Activated CD4-positive, alpha-beta T cell treated with anti-CD3 and anti-CD28 coated beads for 36 hours (primary cell): ENCODE measurements at regions of chr15 and their contacts with region 1.

Region 1: GRCh38 chr15:73633111-73633990 is at the start of gene NPTN:
- DNase-seq: peak; percentile 99
- ATAC-seq: peak; percentile 91
- H3K4me3 Mint-ChIP-seq: peak within 1 kb of the TSS; percentile 86
- H3K27ac Mint-ChIP-seq: peak within 1 kb of the TSS; percentile 71
- H3K4me1 Mint-ChIP-seq: peaks cover 52% of the 10 kb centered on the region
- H3K27me3 Mint-ChIP-seq: peaks cover 14% of the 10 kb centered on the region
- total RNA-seq, gene NPTN: 43.5 to 73.4 TPM

Region 2: GRCh38 chr15:72783563-72784237 is 849.7 kb before region 1 on chr15 and contains the start of gene ADPGK:
- CTCF ChIA-PET with region 1: no interaction called
- POLR2A ChIA-PET with region 1: no interaction called
- intact Hi-C with region 1: loop called in 1 of 2 experiments (anchors 1 kb)
- DNase-seq: peak; percentile 95
- ATAC-seq: peak; percentile 80
- H3K4me3 Mint-ChIP-seq: peak within 1 kb of the TSS; percentile 97
- H3K27ac Mint-ChIP-seq: peak within 1 kb of the TSS; percentile 99
- H3K4me1 Mint-ChIP-seq: peaks cover 60% of the 10 kb centered on the region
- H3K27me3 Mint-ChIP-seq: no peaks in the 10 kb centered on the region
- total RNA-seq, gene ADPGK: 58.0 to 70.8 TPM

Region 3: GRCh38 chr15:73284090-73284716 is 349.1 kb before region 1 on chr15:
- CTCF ChIA-PET with region 1: interaction called, 7 read pairs
- POLR2A ChIA-PET with region 1: no interaction called
- intact Hi-C with region 1: loop called in 1 of 2 experiments (anchors 1 kb)
- DNase-seq: no peak
- ATAC-seq: no peak
- H3K4me3 Mint-ChIP-seq: no peak overlapping the region
- H3K27ac Mint-ChIP-seq: no peak overlapping the region
- H3K4me1 Mint-ChIP-seq: peaks cover 10% of the 10 kb centered on the region
- H3K27me3 Mint-ChIP-seq: no peaks in the 10 kb centered on the region

Region 4: DNA sequence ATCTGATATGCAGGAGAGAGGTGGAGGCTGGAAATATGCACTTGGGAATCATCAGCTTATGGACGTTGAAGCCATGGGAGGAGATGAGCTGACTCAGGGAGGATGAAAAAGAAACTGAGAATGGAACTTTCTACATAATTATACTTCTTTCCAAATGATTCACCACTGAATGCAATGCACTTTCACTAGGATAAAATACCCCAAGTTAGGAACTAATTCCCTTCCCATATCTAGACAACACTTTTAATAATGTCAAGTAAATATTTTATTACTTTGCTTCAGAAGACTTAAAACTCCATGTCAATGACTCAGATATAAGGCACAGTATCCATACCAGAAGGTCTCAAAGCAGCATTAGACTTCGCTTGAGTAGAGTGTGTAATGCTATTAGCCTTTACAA is 24.4 kb before region 1 on chr15:
- CTCF ChIA-PET with region 1: interaction called, 121 read pairs
- POLR2A ChIA-PET with region 1: interaction called, 3 read pairs
- intact Hi-C with region 1: no loop called
- DNase-seq: no peak
- ATAC-seq: peak; percentile 49
- H3K4me3 Mint-ChIP-seq: no peak overlapping the region
- H3K27ac Mint-ChIP-seq: no peak overlapping the region
- H3K4me1 Mint-ChIP-seq: peaks cover 54% of the 10 kb centered on the region
- H3K27me3 Mint-ChIP-seq: no peaks in the 10 kb centered on the region

Region 5: DNA sequence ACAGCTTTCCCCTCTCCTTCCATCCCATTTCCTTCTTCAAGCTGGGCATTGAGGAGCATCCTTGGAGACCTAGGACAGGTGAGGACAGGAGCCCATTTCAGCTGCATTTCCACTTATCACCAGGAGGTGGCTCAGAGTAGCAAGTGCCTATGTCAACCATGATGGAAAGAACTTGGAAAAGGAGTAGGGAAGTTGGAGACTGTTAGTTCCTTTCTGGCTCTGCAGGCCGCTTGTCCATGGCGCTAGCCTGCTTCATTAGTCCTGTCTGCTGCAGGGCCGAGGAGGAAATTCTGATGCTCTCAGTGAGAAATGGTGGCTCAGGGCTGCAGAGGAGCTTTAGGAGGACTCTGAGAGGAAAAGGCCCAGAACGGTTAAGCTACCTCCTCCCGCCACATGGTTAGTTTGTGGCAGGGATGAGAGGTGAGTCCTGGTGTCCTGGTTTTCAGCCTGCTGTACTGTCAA is 43.8 kb after region 1 on chr15:
- CTCF ChIA-PET with region 1: interaction called, 31 read pairs
- POLR2A ChIA-PET with region 1: interaction called, 9 read pairs
- intact Hi-C with region 1: no loop called
- DNase-seq: peak; percentile 68
- ATAC-seq: peak; percentile 49
- H3K4me3 Mint-ChIP-seq: no peak overlapping the region
- H3K27ac Mint-ChIP-seq: no peak overlapping the region
- H3K4me1 Mint-ChIP-seq: peaks cover 17% of the 10 kb centered on the region
- H3K27me3 Mint-ChIP-seq: peaks cover 33% of the 10 kb centered on the region

Region 6: DNA sequence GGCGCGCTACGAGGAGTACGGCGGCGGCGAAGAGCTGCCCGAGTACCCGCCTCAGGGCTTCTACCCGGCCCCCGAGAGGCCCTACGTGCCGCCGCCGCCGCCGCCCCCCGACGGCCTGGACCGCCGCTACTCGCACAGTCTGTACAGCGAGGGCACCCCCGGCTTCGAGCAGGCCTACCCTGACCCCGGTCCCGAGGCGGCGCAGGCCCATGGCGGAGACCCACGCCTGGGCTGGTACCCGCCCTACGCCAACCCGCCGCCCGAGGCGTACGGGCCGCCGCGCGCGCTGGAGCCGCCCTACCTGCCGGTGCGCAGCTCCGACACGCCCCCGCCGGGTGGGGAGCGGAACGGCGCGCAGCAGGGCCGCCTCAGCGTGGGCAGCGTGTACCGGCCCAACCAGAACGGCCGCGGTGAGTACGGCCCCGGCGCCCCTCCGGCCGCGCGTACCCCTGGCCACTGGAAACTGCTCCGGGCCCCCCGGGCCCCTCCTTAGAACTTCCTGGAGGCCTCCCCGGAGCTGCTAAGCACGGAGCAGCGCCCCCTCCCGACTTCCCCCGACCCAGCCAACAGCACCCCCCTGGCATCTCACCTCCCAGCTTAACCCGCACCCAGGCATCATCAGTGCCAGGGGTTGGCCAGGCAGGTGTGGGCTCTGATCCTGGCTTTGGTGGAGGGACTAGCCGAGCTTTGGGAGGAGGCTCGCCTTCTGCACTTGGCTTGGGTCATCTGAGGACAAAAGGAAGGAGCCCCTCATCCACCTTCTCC is 294.3 kb after region 1 on chr15:
- CTCF ChIA-PET with region 1: no interaction called
- POLR2A ChIA-PET with region 1: no interaction called
- intact Hi-C with region 1: loop called in 1 of 2 experiments (anchors 5 kb)
- DNase-seq: peak; percentile 87
- ATAC-seq: peak; percentile 77
- H3K4me3 Mint-ChIP-seq: peak overlapping the region; percentile 72
- H3K27ac Mint-ChIP-seq: peak overlapping the region; percentile 42
- H3K4me1 Mint-ChIP-seq: peaks cover 35% of the 10 kb centered on the region
- H3K27me3 Mint-ChIP-seq: no peaks in the 10 kb centered on the region

Region 7: DNA sequence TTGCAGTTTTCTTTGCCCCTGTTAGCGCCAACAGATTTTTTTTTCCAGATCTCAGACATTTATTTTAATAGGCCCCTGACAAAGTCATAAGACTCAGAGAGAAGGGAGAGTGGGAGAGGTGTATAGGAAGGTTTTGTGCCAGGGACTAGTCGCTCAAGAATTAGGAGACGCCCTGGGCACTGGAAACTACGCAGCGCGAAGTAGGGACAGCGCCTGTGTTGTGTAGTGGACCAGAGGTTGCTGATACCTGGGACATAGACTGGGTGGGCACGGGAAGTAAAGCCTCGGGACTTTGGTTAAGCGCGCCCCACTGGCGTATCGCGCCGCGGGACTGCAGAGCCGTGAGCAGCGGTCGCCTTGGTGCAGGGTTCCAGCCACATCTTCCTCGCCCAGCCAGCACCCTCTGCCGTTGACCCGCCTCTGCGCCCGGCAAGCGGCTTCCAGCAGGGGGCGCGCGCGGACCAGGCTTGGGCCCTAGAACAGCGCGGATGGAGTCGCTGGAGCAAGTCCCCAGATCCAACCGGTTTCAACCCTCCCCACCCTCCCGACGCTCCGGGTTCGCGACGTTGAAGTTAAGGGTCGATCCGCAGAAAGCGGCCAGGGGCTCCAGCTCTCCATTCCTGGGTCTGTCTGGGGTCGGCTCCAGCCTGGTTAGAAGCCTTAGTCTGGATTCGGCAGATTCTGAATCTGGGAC is 494.1 kb after region 1 on chr15:
- CTCF ChIA-PET with region 1: no interaction called
- POLR2A ChIA-PET with region 1: no interaction called
- intact Hi-C with region 1: no loop called
- DNase-seq: peak; percentile 94
- ATAC-seq: peak; percentile 96
- H3K4me3 Mint-ChIP-seq: peak overlapping the region; percentile 21
- H3K27ac Mint-ChIP-seq: no peak overlapping the region
- H3K4me1 Mint-ChIP-seq: peaks cover 19% of the 10 kb centered on the region
- H3K27me3 Mint-ChIP-seq: peaks cover 60% of the 10 kb centered on the region